CD8-positive, alpha-beta memory T cell (primary cell): ENCODE measurements at regions of chr2 and their contacts with region 1.

Region 1: GRCh38 chr2:105237045-105237765 is 4.3 kb upstream of the GPR45 start:
- DNase-seq: peak in 1 of 5 donors; percentile 3
- H3K4me3 ChIP-seq: no peak overlapping the region
- H3K4me3 Mint-ChIP-seq: peak overlapping the region in 4 of 7 donors; percentile 20 to 66 (median 46)
- H3K27ac ChIP-seq: no peak overlapping the region
- H3K27ac Mint-ChIP-seq: peak overlapping the region in 3 of 8 donors; percentile 15 to 89 (median 22)
- H3K4me1 ChIP-seq: no peaks in the 10 kb centered on the region
- H3K4me1 Mint-ChIP-seq: peaks cover 4 to 25% (median 5%) of the 10 kb centered on the region in 3 donors
- H3K27me3 ChIP-seq: no peaks in the 10 kb centered on the region
- H3K27me3 Mint-ChIP-seq: peaks cover 10 to 24% of the 10 kb centered on the region in 2 donors

Region 2: DNA sequence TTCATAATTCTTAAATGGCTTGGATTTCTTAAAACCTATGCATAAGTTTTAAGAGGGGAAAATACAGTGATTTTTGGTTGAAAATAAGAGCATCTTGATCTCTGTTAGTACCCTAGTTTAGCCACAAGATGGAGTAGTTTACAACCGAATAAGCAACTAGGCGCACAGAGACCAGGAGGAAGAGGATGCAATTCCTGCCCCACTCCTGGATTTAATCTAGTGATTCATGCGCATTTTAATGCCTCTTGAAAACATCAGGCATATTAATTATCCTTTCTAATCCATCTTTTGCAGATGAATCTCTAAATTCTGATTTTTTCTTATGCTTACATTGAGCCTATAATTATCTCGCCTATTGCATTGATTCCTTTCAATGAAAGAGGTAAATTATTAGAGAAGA is 122.7 kb before region 1 on chr2:
- CTCF ChIA-PET with region 1: interaction called, 15 read pairs
- POLR2A ChIA-PET with region 1: no interaction called
- DNase-seq: peak in 2 of 5 donors; percentile 21 to 22
- H3K4me3 ChIP-seq: no peak overlapping the region
- H3K4me3 Mint-ChIP-seq: no peak overlapping the region
- H3K27ac ChIP-seq: no peak overlapping the region
- H3K27ac Mint-ChIP-seq: no peak overlapping the region
- H3K4me1 ChIP-seq: no peaks in the 10 kb centered on the region
- H3K4me1 Mint-ChIP-seq: no peaks in the 10 kb centered on the region
- H3K27me3 ChIP-seq: no peaks in the 10 kb centered on the region
- H3K27me3 Mint-ChIP-seq: no peaks in the 10 kb centered on the region

Region 3: GRCh38 chr2:105324732-105325131 is 87.5 kb after region 1 on chr2:
- CTCF ChIA-PET with region 1: no interaction called
- POLR2A ChIA-PET with region 1: no interaction called
- DNase-seq: no peak
- H3K4me3 ChIP-seq: no peak overlapping the region
- H3K4me3 Mint-ChIP-seq: no peak overlapping the region
- H3K27ac ChIP-seq: no peak overlapping the region
- H3K27ac Mint-ChIP-seq: peak overlapping the region in 6 of 8 donors; percentile 11 to 95 (median 68)
- H3K4me1 ChIP-seq: peaks cover 19% of the 10 kb centered on the region
- H3K4me1 Mint-ChIP-seq: peaks cover 60 to 83% (median 78%) of the 10 kb centered on the region in 3 donors
- H3K27me3 ChIP-seq: no peaks in the 10 kb centered on the region
- H3K27me3 Mint-ChIP-seq: no peaks in the 10 kb centered on the region